Sciatic nerve (tissue), 2 donors: ENCODE measurements at regions of chr15 and their contacts with region 1.

Region 1: DNA sequence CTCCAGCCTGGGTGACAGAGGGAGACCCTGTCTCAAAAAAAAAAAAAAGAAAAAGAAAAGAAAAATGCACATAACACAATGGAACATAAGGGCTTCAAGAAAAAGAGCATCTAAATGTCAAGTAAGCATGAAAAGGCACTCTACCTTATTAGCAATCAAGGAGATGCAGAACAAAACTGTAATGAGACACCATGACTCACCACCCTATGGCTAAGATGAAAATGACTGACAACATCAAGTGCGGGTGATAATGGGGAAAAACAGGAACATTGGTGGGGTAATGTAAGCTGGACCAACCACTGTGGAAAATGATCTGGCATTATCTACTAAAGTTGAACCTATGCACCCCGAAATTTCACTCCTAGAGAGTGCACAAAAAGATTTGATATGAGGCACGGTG is 19.6 kb upstream of the NSMCE3 start:
- DNase-seq: no peak
- ATAC-seq: no peak

Region 2: GRCh38 chr15:29233566-29233965 is 55.6 kb before region 1 on chr15:
- intact Hi-C with region 1: loop called (anchors 2 kb)
- DNase-seq: no peak
- ATAC-seq: no peak

Region 3: DNA sequence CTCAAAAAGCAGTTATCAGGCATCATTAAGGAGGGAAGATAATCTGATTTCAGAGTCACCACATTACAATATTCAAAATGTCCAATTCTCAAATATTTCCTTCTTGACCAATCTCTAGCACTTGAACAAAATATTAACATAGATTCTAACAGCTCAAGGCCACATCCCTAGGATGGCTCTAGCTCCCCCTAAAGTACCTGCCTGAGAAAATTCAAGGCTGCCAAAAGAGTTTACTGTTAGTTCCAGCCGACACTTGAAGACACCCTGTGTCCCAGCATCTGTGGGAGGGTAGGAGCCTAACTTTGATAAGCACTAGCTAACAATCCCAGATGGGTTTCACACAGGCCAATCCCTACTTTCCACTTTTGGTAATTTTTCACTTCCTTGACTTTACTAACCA is 29.9 kb before region 1 on chr15:
- intact Hi-C with region 1: no loop called
- DNase-seq: no peak
- ATAC-seq: no peak

Region 4: DNA sequence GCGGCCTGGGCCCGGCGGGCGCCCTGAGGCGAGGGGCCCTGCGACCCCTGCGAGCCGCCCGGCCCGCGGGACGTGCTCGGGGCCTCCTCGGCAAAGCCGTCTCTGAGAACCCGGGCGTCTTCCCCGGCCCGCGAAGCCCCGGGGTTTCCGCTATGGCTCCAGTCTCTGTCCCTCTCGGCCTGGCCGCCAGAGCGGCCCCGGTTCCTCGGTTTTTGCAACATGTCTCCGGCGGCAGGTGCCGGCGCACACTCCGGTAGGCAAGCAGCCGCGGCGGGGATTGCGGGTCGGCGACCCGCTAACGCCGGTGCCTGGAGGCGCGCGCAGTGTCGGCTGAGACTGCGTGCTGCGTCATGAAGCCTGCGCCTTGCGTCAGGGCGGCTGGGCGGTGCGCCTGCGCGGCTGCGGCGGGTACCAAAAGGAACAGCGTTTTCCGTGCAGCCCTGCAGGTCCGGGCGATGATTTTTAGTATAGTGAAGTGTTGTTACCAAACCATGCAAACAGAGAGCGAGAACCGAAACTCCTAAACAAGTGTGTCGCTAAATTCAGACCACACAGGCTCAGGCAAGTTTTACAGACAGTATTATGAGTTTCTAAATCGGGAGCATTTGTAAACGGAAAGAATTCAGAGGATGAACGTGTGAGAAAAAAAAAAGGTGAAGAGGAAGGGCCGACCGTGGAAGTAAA is 19.5 kb before region 1 on chr15 and contains the start of gene NSMCE3:
- intact Hi-C with region 1: no loop called
- DNase-seq: peak; percentile 94
- ATAC-seq: peak; percentile 99
- total RNA-seq, gene NSMCE3: 7.4 TPM

Region 5: GRCh38 chr15:29821416-29822131 is 532.4 kb after region 1 on chr15:
- intact Hi-C with region 1: no loop called
- DNase-seq: peak; percentile 78
- ATAC-seq: peak; percentile 73